ENCODE measurements at regions of chr12 and their contacts with region 1.

Region 1: DNA sequence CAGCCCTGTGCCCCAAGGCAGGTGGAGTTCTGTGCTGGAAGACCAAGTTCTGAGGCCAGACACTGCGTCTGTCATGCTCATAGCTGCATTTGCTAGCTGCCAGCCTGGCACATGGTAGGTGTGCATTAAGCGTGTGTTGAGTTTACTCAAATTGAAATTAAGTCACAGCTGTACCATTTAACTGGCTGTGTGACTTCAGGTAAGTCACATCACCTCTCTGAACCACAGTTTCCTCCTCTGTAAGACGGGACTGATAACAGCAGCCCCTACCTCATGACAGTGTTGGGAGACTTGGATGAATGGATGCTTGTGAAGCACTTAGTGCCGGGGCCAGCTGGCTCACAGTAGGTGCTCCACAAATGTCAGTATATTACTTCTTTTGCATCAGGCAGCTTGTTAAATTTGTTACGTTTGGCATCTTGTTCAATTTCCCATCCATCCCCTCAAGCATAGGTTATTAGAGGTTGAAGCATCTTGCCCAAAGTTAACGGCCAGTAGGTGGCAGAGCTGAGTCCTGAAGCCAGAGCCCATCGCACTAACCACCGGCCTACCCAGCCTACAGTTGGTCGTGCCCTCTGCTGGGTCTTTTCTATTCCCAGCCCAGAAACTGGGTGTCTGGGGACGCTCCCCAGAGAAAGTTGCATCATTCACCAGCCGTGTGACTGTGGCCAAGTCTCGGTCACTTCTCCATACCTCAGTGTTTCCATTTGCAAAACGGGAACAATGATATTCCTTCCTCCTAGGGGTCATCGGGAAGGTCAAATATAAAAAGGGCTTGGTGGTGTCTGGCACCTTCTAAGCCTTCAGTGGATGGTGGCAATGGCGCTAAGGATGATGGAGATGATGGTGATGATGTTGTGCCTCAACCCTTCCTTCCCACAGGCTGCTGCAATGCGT is 4.5 kb downstream of the DAO start:
- DNase-seq: peak; percentile 58 to 77 (median 72)
- ATAC-seq: no peak
- H3K4me3 ChIP-seq: no peak overlapping the region
- H3K27ac ChIP-seq: no peak overlapping the region
- H3K4me1 ChIP-seq: no peaks in the 10 kb centered on the region
- H3K27me3 ChIP-seq: no peaks in the 10 kb centered on the region
- CTCF ChIP-seq: peak; percentile 17 to 59 (median 52)
- POLR2A ChIP-seq: no peak

Region 2: GRCh38 chr12:109093022-109093918 is 208.9 kb after region 1 on chr12 and contains the start of gene ALKBH2:
- intact Hi-C with region 1: loop called (anchors 10 kb)
- DNase-seq: peak; percentile 94 to 95 (median 94)
- ATAC-seq: peak; percentile 80
- H3K4me3 ChIP-seq: no peak within 1 kb of the TSS
- H3K27ac ChIP-seq: peak within 1 kb of the TSS; percentile 37 to 67 (median 54)
- H3K4me1 ChIP-seq: peaks cover 32% of the 10 kb centered on the region
- H3K27me3 ChIP-seq: no peaks in the 10 kb centered on the region
- CTCF ChIP-seq: peak; percentile 96 to 99 (median 99)
- POLR2A ChIP-seq: peak; percentile 31 to 79 (median 69)
- total RNA-seq, gene ALKBH2: 7.3 to 16.1 TPM

Region 3: GRCh38 chr12:109182041-109182839 is 297.9 kb after region 1 on chr12:
- intact Hi-C with region 1: no loop called
- DNase-seq: no peak
- ATAC-seq: no peak
- H3K4me3 ChIP-seq: no peak overlapping the region
- H3K27ac ChIP-seq: no peak overlapping the region
- H3K4me1 ChIP-seq: no peaks in the 10 kb centered on the region
- H3K27me3 ChIP-seq: no peaks in the 10 kb centered on the region
- CTCF ChIP-seq: no peak
- POLR2A ChIP-seq: no peak

Measured in body of pancreas (tissue), 4 donors.